H1 (cell line): ENCODE measurements at regions of chr2 and their contacts with region 1.

Region 1: GRCh38 chr2:241865957-241866789 is 3.4 kb upstream of the RTP5 start:
- DNase-seq: peak in 1 of 2 experiments; percentile 75
- H3K4me3 ChIP-seq: no peak overlapping the region
- H3K27ac ChIP-seq: no peak overlapping the region
- H3K4me1 ChIP-seq: peaks cover 0 to 11% (median 3%) of the 10 kb centered on the region in 4 experiments; a peak in 5 of 7 replicates
- H3K27me3 ChIP-seq: peaks cover 0 to 16% (median 0%) of the 10 kb centered on the region in 4 experiments; a peak in 3 of 7 replicates
- CTCF ChIP-seq: no peak
- EP300 ChIP-seq: no peak
- POLR2A ChIP-seq: no peak
- RAD21 ChIP-seq: no peak

Region 2: DNA sequence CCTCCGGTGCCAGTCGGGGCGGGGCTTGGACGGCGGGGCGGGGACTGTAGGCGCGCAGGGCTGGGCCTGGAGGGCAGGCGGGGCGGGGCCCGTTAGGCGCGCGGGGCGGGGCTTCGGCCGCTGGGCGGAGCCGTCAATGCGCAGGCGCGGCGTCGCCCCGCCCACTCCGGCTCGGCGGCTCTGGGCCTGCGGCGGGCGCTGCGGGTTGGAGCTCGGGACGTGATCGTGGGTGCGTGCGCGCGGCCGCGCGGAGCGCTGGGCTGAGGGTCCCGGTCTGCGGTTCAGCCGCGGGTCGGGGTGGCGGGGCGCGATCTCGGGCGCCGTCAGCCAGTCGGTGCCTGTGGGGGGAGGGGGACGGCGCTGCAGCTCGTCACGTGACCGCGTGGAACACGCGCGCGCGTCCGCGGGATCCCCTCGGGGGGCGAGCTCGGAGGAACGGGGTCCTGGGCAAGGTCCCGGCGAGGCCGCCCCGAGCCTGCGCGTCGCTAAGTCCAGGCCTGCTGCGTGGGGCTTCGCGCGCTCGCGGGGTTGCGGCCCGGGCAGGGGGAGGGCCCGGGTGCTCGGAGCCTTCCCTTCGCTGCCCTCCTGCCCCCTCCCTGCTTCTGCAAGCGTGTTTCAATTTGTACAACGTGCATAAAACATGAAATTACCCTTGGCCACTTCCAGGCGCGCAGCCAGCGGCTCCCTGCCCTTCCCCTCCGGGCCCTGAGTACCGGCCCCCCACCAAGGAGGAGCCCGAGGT is 131.5 kb before region 1 on chr2 and contains the start of gene D2HGDH:
- CTCF ChIA-PET with region 1: interaction called, 23 read pairs
- POLR2A ChIA-PET with region 1: no interaction called
- DNase-seq: peak; percentile 50 to 98
- H3K4me3 ChIP-seq: peak within 1 kb of the TSS; percentile 71 to 94 (median 78)
- H3K27ac ChIP-seq: peak within 1 kb of the TSS; percentile 20; the same call in 1 of the 2 replicates
- H3K4me1 ChIP-seq: peaks cover 0 to 6% (median 0%) of the 10 kb centered on the region in 4 experiments; a peak in 2 of 7 replicates
- H3K27me3 ChIP-seq: peaks cover 0 to 4% (median 3%) of the 10 kb centered on the region in 4 experiments; a peak in 4 of 7 replicates
- CTCF ChIP-seq: no peak
- EP300 ChIP-seq: no peak
- POLR2A ChIP-seq: peak in 1 of 2 experiments; percentile 58; a peak in 1 of 3 replicates
- RAD21 ChIP-seq: no peak
- total RNA-seq, gene D2HGDH: 8.1 and 8.3 TPM in 2 replicates